A673 (cell line): ENCODE measurements at regions of chr5 and their contacts with region 1.

Region 1: GRCh38 chr5:65925601-65926275 is 637 bp upstream of the ERBIN start:
- DNase-seq: peak; percentile 94
- H3K4me3 ChIP-seq: peak overlapping the region; percentile 73
- H3K27ac ChIP-seq: peak overlapping the region; percentile 96
- H3K4me1 ChIP-seq: peaks cover 7% of the 10 kb centered on the region
- H3K27me3 ChIP-seq: no peaks in the 10 kb centered on the region
- CTCF ChIP-seq: peak; percentile 43

Region 2: GRCh38 chr5:65721720-65722574 is 203.8 kb before region 1 on chr5 and contains the starts of genes NLN and SGTB:
- CTCF ChIA-PET with region 1: no interaction called
- POLR2A ChIA-PET with region 1: no interaction called
- intact Hi-C with region 1: loop called (anchors 2 kb)
- DNase-seq: peak; percentile 85
- H3K4me3 ChIP-seq: peak within 1 kb of the TSS; percentile 77
- H3K27ac ChIP-seq: peak within 1 kb of the TSS; percentile 85
- H3K4me1 ChIP-seq: peaks cover 16% of the 10 kb centered on the region
- H3K27me3 ChIP-seq: no peaks in the 10 kb centered on the region
- CTCF ChIP-seq: no peak
- total RNA-seq, gene NLN: 95.2 and 99.9 TPM in 2 replicates
- total RNA-seq, gene SGTB: 19.1 and 19.8 TPM in 2 replicates